Activated naive CD4-positive, alpha-beta T cell treated with anti-CD3 and anti-CD28 coated beads for 36 hours (primary cell): ENCODE measurements at regions of chr3 and their contacts with region 1.

Region 1: GRCh38 chr3:187025656-187026316 is 95.5 kb downstream of the ST6GAL1 start:
- DNase-seq: peak; percentile 61
- H3K4me3 Mint-ChIP-seq: peak overlapping the region; percentile 79
- H3K27ac Mint-ChIP-seq: peak overlapping the region; percentile 97
- H3K4me1 Mint-ChIP-seq: peaks cover 51% of the 10 kb centered on the region
- H3K27me3 Mint-ChIP-seq: no peaks in the 10 kb centered on the region

Region 2: DNA sequence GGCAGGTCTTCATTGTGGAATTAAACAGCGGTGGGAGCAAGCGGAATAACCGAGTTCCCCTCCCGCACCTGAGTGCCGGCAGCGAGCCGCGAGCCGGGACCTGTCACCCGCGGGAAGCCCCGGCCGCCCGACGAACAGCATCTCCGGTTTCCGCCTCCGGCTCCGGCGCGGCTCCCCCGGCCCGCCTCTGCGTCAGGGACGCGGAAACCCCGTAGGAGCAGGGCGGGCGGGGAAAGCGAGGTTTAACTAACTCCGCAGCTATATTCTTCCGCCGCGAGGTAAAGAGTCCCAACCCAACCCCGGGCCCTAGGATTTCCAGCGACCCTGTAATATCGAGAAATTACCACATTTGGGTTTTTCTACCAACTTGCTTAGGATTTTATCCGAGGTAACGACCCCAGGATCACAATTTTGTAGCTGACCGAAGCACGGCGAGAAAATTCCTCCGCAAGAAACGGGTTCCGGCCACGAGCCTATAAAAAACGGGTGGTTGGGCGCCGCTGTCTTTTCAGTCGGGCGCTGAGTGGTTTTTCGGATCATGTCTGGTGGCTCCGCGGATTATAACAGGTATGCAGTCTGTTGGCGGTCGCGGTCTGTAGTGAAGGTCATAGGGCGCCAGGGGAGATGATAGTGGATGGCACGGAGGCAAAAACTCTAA is 242.6 kb before region 1 on chr3 and contains the start of gene EIF4A2:
- CTCF ChIA-PET with region 1: no interaction called
- intact Hi-C with region 1: loop called (anchors 5 kb)
- DNase-seq: peak; percentile 91
- H3K4me3 Mint-ChIP-seq: peak within 1 kb of the TSS; percentile 99
- H3K27ac Mint-ChIP-seq: peak within 1 kb of the TSS; percentile 100
- H3K4me1 Mint-ChIP-seq: peaks cover 29% of the 10 kb centered on the region
- H3K27me3 Mint-ChIP-seq: peaks cover 3% of the 10 kb centered on the region
- total RNA-seq, gene EIF4A2: 445 to 469 TPM

Region 3: GRCh38 chr3:186882881-186883685 is 142.7 kb before region 1 on chr3:
- CTCF ChIA-PET with region 1: interaction called, 4 read pairs
- intact Hi-C with region 1: loop called (anchors 1 kb)
- DNase-seq: peak; percentile 74
- H3K4me3 Mint-ChIP-seq: peak overlapping the region; percentile 14
- H3K27ac Mint-ChIP-seq: peak overlapping the region; percentile 72
- H3K4me1 Mint-ChIP-seq: peaks cover 56% of the 10 kb centered on the region
- H3K27me3 Mint-ChIP-seq: no peaks in the 10 kb centered on the region

Region 4: DNA sequence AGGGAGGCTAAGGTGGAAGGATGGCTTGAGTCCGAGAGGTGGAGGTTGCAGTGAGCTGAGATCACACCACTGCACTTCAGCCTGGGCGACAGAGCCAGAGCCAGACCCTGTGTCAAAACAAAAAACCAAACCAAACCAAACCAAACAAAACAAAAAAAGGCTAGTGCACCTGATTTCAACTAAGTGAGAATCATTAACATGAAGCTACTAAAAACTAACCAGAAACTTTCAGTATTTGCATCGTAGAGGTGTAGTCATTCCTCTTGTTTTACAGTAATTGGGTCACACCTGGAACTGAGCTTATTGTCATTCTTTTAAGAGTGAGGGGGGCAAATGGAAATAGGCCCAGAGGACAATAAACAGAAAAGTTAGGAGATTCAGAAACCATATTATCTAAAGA is 37.0 kb before region 1 on chr3:
- CTCF ChIA-PET with region 1: interaction called, 3 read pairs
- intact Hi-C with region 1: loop called (anchors 1 kb)
- DNase-seq: peak; percentile 47
- H3K4me3 Mint-ChIP-seq: no peak overlapping the region
- H3K27ac Mint-ChIP-seq: peak overlapping the region; percentile 83
- H3K4me1 Mint-ChIP-seq: peaks cover 59% of the 10 kb centered on the region
- H3K27me3 Mint-ChIP-seq: no peaks in the 10 kb centered on the region

Region 5: GRCh38 chr3:187011915-187012314 is 13.9 kb before region 1 on chr3:
- CTCF ChIA-PET with region 1: interaction called, 9 read pairs
- intact Hi-C with region 1: loop called (anchors 2 kb)
- DNase-seq: no peak
- H3K4me3 Mint-ChIP-seq: no peak overlapping the region
- H3K27ac Mint-ChIP-seq: peak overlapping the region; percentile 87
- H3K4me1 Mint-ChIP-seq: peaks cover 63% of the 10 kb centered on the region
- H3K27me3 Mint-ChIP-seq: no peaks in the 10 kb centered on the region

Region 6: DNA sequence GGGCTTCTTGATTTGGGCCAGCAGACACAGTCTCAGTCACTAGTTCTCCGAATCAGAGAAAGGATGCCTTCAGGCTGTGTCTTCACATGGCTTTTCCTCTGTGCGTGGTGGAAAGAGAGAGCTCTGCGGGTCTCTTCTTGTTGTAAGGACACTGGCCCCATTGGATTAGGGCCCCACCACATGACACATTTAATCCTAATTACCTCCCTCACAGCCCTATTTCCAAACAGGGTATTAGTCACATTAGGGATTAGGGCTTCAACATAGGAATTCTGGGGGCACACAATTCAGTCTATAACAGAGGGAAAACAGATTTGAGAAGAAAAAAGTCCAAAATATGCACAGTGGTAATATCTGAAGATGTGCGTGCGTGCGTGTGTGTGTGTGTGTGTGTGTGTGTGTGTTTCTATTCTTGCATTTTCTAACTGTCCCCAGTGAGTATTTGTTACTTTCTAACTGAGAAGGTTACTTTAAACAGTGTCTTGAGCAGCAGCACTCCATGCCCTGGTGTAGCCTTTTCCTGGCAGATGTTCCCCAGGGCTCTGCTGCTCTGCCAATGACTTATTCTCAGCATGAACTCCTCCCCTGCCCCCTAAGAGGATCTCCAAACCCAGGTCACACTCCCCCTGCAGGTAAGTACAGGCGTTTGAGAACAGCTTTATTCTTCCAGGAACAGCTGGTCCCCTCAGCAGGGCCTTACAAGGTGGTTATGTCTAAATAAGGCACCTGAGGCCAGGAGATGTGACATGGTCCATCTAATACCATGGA is 40.6 kb after region 1 on chr3:
- CTCF ChIA-PET with region 1: interaction called, 6 read pairs
- intact Hi-C with region 1: loop called (anchors 1 kb)
- DNase-seq: peak; percentile 66
- H3K4me3 Mint-ChIP-seq: no peak overlapping the region
- H3K27ac Mint-ChIP-seq: peak overlapping the region; percentile 79
- H3K4me1 Mint-ChIP-seq: peaks cover 66% of the 10 kb centered on the region
- H3K27me3 Mint-ChIP-seq: no peaks in the 10 kb centered on the region

Region 7: GRCh38 chr3:187082758-187083375 is 57.1 kb after region 1 on chr3:
- CTCF ChIA-PET with region 1: no interaction called
- intact Hi-C with region 1: no loop called
- DNase-seq: no peak
- H3K4me3 Mint-ChIP-seq: no peak overlapping the region
- H3K27ac Mint-ChIP-seq: no peak overlapping the region
- H3K4me1 Mint-ChIP-seq: peaks cover 11% of the 10 kb centered on the region
- H3K27me3 Mint-ChIP-seq: no peaks in the 10 kb centered on the region

Region 8: GRCh38 chr3:187139126-187139894 is 113.5 kb after region 1 on chr3 and contains the start of gene RPL39L:
- CTCF ChIA-PET with region 1: interaction called, 8 read pairs
- intact Hi-C with region 1: loop called (anchors 1 kb)
- DNase-seq: peak; percentile 95
- H3K4me3 Mint-ChIP-seq: peak within 1 kb of the TSS; percentile 91
- H3K27ac Mint-ChIP-seq: peak within 1 kb of the TSS; percentile 95
- H3K4me1 Mint-ChIP-seq: peaks cover 21% of the 10 kb centered on the region
- H3K27me3 Mint-ChIP-seq: no peaks in the 10 kb centered on the region
- total RNA-seq, gene RPL39L: 19.2 to 20.9 TPM